Caco-2 (cell line): ENCODE measurements at regions of chr4 and their contacts with region 1.

Region 1: GRCh38 chr4:154779362-154779947 is 1.6 kb upstream of the RBM46 start:
- DNase-seq: peak in 1 of 2 experiments; percentile 4
- H3K4me3 ChIP-seq: no peak overlapping the region
- H3K4me3 Mint-ChIP-seq: no peak overlapping the region
- H3K27ac Mint-ChIP-seq: no peak overlapping the region
- H3K4me1 ChIP-seq: no peaks in the 10 kb centered on the region
- H3K4me1 Mint-ChIP-seq: no peaks in the 10 kb centered on the region
- H3K27me3 ChIP-seq: no peaks in the 10 kb centered on the region; the same call in 1 of the 2 replicates
- H3K27me3 Mint-ChIP-seq: peaks cover 21% of the 10 kb centered on the region
- CTCF ChIP-seq: peak; percentile 56 to 57

Region 2: DNA sequence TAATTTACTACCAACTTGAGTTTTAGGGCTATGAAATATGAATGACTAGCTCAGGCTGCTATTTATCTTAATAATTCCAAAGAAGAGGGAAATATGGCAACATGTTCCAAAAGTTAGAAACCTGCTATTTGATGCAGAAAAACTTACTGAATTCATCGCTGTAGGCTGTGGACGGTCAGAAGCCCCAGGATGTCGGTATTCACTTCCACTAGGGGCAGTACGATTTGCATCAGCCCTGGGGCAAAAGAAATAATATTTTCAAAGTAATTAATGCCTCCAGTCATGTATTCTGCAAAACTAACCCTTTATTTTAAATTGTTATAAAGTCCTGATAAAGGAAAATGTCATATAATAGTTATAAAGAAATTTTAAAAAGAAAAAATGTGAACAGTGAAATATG is 233.8 kb before region 1 on chr4:
- CTCF ChIA-PET with region 1: no interaction called
- POLR2A ChIA-PET with region 1: no interaction called
- intact Hi-C with region 1: no loop called
- DNase-seq: no peak
- H3K4me3 ChIP-seq: no peak overlapping the region
- H3K4me3 Mint-ChIP-seq: no peak overlapping the region
- H3K27ac Mint-ChIP-seq: no peak overlapping the region
- H3K4me1 ChIP-seq: 0 out of 2 replicates have a peak, but pooled peaks cover 4% of the 10 kb centered on the region
- H3K4me1 Mint-ChIP-seq: peaks cover 11% of the 10 kb centered on the region
- H3K27me3 ChIP-seq: no peaks in the 10 kb centered on the region
- H3K27me3 Mint-ChIP-seq: no peaks in the 10 kb centered on the region
- CTCF ChIP-seq: peak in 1 of 2 experiments; percentile 27

Region 3: DNA sequence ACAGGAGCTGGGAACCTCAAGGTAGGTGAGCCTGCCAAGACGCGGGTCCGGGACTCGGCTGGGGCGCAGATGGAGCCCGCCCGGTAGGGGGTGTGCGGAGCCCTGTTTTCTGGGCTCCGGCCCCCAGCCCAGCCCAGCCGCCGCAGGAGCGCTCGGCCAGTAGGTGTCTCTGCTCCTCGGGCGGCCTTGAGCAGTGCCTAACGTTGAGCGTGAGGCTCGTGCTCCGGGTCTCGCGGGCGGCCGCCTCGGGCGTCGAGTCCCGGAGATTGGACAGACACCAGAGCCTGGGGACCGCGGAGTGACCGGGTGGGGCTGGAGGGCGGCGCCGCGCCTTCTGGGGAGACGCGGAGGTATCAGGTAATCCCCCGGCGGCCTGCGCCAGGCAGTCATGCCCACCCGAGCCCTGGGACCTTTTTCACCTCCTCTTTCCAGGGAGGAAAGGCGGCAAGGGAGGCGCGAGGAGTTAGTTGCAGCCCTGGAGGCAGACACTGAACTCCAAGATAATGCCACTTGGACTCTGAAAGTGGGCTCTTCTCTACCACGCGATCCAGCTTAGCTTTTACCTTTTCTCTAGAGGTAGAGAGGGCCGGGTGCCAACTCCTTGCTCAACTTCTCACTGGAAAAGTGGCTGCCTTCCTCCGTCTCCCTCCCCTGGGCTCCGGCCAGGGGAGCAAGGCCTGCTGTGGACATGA is 152.5 kb before region 1 on chr4:
- CTCF ChIA-PET with region 1: interaction called, 3 read pairs
- POLR2A ChIA-PET with region 1: interaction called, 4 read pairs
- intact Hi-C with region 1: loop called (anchors 1 kb)
- DNase-seq: peak; percentile 85 to 88
- H3K4me3 ChIP-seq: peak overlapping the region; percentile 41
- H3K4me3 Mint-ChIP-seq: no peak overlapping the region
- H3K27ac Mint-ChIP-seq: no peak overlapping the region
- H3K4me1 ChIP-seq: peaks cover 6% of the 10 kb centered on the region
- H3K4me1 Mint-ChIP-seq: peaks cover 9% of the 10 kb centered on the region
- H3K27me3 ChIP-seq: no peaks in the 10 kb centered on the region; the same call in 1 of the 2 replicates
- H3K27me3 Mint-ChIP-seq: peaks cover 4% of the 10 kb centered on the region
- CTCF ChIP-seq: peak; percentile 79 to 95

Region 4: GRCh38 chr4:154642373-154643009 is 137.0 kb before region 1 on chr4:
- CTCF ChIA-PET with region 1: interaction called, 3 read pairs
- POLR2A ChIA-PET with region 1: no interaction called
- intact Hi-C with region 1: loop called (anchors 1 kb)
- DNase-seq: no peak
- H3K4me3 ChIP-seq: no peak overlapping the region
- H3K4me3 Mint-ChIP-seq: no peak overlapping the region
- H3K27ac Mint-ChIP-seq: no peak overlapping the region
- H3K4me1 ChIP-seq: no peaks in the 10 kb centered on the region
- H3K4me1 Mint-ChIP-seq: no peaks in the 10 kb centered on the region
- H3K27me3 ChIP-seq: no peaks in the 10 kb centered on the region
- H3K27me3 Mint-ChIP-seq: peaks cover 3% of the 10 kb centered on the region
- CTCF ChIP-seq: no peak

Region 5: DNA sequence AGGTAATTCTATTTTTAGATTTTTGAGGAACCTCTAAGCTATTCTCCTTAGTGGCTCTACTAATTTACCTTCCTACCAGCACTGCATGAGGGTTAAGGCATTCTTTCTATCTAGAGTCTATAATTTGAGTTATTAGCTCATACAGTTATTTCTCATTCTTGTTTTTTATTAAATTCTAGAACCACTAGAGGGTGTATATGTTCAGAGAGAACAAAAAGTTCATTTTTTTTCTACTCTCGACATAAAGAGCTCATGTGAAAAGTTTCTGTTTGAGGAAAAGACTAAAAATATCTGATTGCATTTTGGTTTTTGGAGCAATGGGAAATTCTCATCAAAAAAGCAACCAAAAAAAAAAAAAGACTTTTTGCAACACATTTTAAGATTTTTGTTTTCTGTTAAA is 92.6 kb before region 1 on chr4:
- CTCF ChIA-PET with region 1: no interaction called
- POLR2A ChIA-PET with region 1: no interaction called
- intact Hi-C with region 1: loop called (anchors 1 kb)
- DNase-seq: no peak
- H3K4me3 ChIP-seq: no peak overlapping the region
- H3K4me3 Mint-ChIP-seq: no peak overlapping the region
- H3K27ac Mint-ChIP-seq: no peak overlapping the region
- H3K4me1 ChIP-seq: peaks cover 4% of the 10 kb centered on the region; the same call in 1 of the 2 replicates
- H3K4me1 Mint-ChIP-seq: peaks cover 11% of the 10 kb centered on the region
- H3K27me3 ChIP-seq: no peaks in the 10 kb centered on the region
- H3K27me3 Mint-ChIP-seq: no peaks in the 10 kb centered on the region
- CTCF ChIP-seq: peak in 1 of 2 experiments; percentile 32